Endothelial cell of umbilical vein (primary cell): ENCODE measurements at regions of chr11 and their contacts with region 1.

Region 1: GRCh38 chr11:125625630-125626287 is 796 bp downstream of the CHEK1 start:
- DNase-seq: peak; percentile 91
- H3K4me3 ChIP-seq: peak overlapping the region; percentile 24 to 91 (median 60)
- H3K27ac ChIP-seq: peak overlapping the region; percentile 49
- H3K4me1 ChIP-seq: peaks cover 27% of the 10 kb centered on the region
- H3K27me3 ChIP-seq: no peaks in the 10 kb centered on the region
- CTCF ChIP-seq: no peak
- POLR2A ChIP-seq: peak; percentile 71

Region 2: GRCh38 chr11:125568970-125569914 is 56.5 kb before region 1 on chr11 and contains the start of gene EI24:
- CTCF ChIA-PET with region 1: no interaction called
- POLR2A ChIA-PET with region 1: no interaction called
- dilution Hi-C with region 1: no loop called
- intact Hi-C with region 1: loop called (anchors 2 kb)
- DNase-seq: peak; percentile 92
- H3K4me3 ChIP-seq: peak within 1 kb of the TSS; percentile 7 to 74 (median 66)
- H3K27ac ChIP-seq: peak within 1 kb of the TSS; percentile 5
- H3K4me1 ChIP-seq: peaks cover 10% of the 10 kb centered on the region
- H3K27me3 ChIP-seq: no peaks in the 10 kb centered on the region
- CTCF ChIP-seq: peak; percentile 58 to 86
- POLR2A ChIP-seq: peak; percentile 96
- total RNA-seq, gene EI24: 115 and 119 TPM in 2 replicates

Region 3: GRCh38 chr11:125670172-125670571 is 44.4 kb after region 1 on chr11:
- CTCF ChIA-PET with region 1: interaction called, 15 read pairs
- POLR2A ChIA-PET with region 1: no interaction called
- dilution Hi-C with region 1: no loop called
- intact Hi-C with region 1: loop called (anchors 1 kb)
- DNase-seq: peak; percentile 62
- H3K4me3 ChIP-seq: no peak overlapping the region
- H3K27ac ChIP-seq: peak overlapping the region; percentile 30
- H3K4me1 ChIP-seq: peaks cover 48% of the 10 kb centered on the region
- H3K27me3 ChIP-seq: no peaks in the 10 kb centered on the region
- CTCF ChIP-seq: no peak
- POLR2A ChIP-seq: no peak

Region 4: DNA sequence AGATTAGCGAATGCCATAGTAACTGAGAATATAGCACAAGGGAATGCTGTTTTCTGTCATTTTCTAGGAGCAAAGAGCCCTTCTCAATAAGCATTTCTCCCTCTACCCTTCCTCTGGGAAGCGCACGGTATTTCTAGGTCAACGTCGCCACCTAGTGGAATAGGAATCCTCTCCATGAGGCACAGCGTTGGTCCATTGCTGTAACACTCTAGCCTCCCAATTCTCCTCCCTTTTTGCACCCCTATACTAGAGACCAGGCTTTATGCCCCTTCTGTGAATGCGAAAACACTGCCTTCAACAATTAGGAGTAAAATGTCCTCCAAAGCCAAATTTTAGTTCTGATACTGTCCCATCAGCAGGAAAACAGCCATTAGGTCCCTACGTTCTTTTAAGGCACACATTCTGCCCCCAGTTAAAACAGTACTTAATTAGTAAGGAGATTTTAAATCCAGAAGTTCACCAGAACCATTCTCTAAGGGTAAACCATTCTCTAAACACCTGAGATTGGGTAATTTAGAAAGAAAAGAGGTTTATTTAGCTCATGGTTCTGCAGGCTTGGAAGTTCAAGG is 248.9 kb after region 1 on chr11:
- CTCF ChIA-PET with region 1: interaction called, 6 read pairs
- POLR2A ChIA-PET with region 1: no interaction called
- dilution Hi-C with region 1: no loop called
- intact Hi-C with region 1: loop called (anchors 1 kb)
- DNase-seq: peak; percentile 66
- H3K4me3 ChIP-seq: no peak overlapping the region
- H3K27ac ChIP-seq: no peak overlapping the region
- H3K4me1 ChIP-seq: no peaks in the 10 kb centered on the region
- H3K27me3 ChIP-seq: no peaks in the 10 kb centered on the region
- CTCF ChIP-seq: peak; percentile 70 to 77
- POLR2A ChIP-seq: no peak